ENCODE measurements at regions of chr17 and their contacts with region 1.

Region 1: DNA sequence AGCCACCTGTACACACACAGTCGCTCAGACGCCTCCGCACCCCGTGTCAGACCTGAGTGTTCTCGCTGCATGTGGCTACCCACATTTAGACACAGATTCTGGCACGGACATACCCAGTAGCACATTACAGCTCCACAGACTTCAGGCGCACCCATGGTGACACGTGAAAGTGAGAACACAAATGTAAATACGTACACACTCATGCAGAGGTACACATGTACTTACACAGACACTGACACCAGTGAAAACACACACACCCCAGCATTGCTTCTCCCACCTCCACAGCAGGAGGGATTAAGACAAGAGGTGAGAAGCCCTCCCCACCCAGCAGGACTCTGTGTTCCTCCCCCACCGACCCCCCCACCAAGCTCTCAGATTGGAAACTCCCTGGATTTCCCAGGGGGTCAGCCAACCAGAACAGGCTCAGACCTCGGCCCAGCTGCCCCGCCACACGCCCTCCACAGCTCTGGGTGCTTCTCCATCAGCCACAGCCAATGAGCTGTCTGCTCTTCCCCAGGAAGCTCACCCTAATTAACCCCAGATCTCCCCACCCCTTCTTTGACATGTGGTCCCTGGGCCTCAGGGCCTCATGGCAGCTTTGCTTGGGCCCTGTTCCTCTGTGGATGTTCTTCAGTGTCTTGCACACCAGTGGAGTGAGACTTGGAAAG is 5.3 kb upstream of the FOXN1 start:
- DNase-seq: peak in 1 of 5 donors; percentile 27
- ATAC-seq: peak in 1 of 4 donors; percentile 12
- H3K4me3 ChIP-seq: no peak overlapping the region
- H3K27ac ChIP-seq: no peak overlapping the region
- H3K4me1 ChIP-seq: peaks cover 0 to 13% (median 0%) of the 10 kb centered on the region in 12 donors
- H3K27me3 ChIP-seq: peaks cover 0 to 7% (median 0%) of the 10 kb centered on the region in 9 donors
- CTCF ChIP-seq: no peak
- POLR2A ChIP-seq: no peak

Region 2: GRCh38 chr17:28532991-28533807 is 32.4 kb after region 1 on chr17:
- intact Hi-C with region 1: loop called in 5 of 10 experiments (anchors 5 kb)
- DNase-seq: no peak
- ATAC-seq: no peak
- H3K4me3 ChIP-seq: no peak overlapping the region
- H3K27ac ChIP-seq: no peak overlapping the region
- H3K4me1 ChIP-seq: no peaks in the 10 kb centered on the region
- H3K27me3 ChIP-seq: peaks cover 0 to 6% (median 0%) of the 10 kb centered on the region in 9 donors
- CTCF ChIP-seq: no peak
- POLR2A ChIP-seq: no peak

Region 3: DNA sequence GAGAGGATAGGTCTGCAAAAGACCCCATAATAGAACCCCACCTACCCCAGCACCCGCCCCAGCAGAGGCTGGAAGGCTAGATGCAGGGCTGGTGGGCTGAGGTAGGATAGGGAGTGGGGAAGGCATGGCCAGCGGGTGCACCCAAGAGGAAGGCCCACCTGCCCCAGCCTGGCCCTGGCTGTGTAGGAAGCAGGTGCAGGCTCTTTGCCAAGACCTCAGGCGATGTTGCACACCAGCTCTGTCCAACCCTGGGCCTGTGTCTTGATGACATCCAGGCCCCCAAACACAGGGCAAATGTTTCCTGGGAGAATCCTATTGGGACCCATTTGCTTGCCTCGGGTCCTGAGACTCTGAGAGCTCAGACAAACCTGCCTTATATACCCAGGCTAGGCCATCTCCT is 39.4 kb after region 1 on chr17:
- intact Hi-C with region 1: loop called in 7 of 10 experiments (anchors 2 to 5 kb)
- DNase-seq: peak in 1 of 5 donors; percentile 41
- ATAC-seq: no peak
- H3K4me3 ChIP-seq: no peak overlapping the region
- H3K27ac ChIP-seq: no peak overlapping the region
- H3K4me1 ChIP-seq: no peaks in the 10 kb centered on the region
- H3K27me3 ChIP-seq: peaks cover 0 to 3% (median 0%) of the 10 kb centered on the region in 9 donors
- CTCF ChIP-seq: no peak
- POLR2A ChIP-seq: no peak

Region 4: GRCh38 chr17:28545787-28546415 is 45.1 kb after region 1 on chr17:
- intact Hi-C with region 1: loop called in 3 of 10 experiments (anchors 2 to 5 kb)
- DNase-seq: peak in 1 of 5 donors; percentile 40
- ATAC-seq: no peak
- H3K4me3 ChIP-seq: no peak overlapping the region
- H3K27ac ChIP-seq: no peak overlapping the region
- H3K4me1 ChIP-seq: peaks cover 0 to 31% (median 5%) of the 10 kb centered on the region in 12 donors
- H3K27me3 ChIP-seq: no peaks in the 10 kb centered on the region
- CTCF ChIP-seq: no peak
- POLR2A ChIP-seq: no peak